ENCODE measurements at regions of chr4 and their contacts with region 1.

Region 1: DNA sequence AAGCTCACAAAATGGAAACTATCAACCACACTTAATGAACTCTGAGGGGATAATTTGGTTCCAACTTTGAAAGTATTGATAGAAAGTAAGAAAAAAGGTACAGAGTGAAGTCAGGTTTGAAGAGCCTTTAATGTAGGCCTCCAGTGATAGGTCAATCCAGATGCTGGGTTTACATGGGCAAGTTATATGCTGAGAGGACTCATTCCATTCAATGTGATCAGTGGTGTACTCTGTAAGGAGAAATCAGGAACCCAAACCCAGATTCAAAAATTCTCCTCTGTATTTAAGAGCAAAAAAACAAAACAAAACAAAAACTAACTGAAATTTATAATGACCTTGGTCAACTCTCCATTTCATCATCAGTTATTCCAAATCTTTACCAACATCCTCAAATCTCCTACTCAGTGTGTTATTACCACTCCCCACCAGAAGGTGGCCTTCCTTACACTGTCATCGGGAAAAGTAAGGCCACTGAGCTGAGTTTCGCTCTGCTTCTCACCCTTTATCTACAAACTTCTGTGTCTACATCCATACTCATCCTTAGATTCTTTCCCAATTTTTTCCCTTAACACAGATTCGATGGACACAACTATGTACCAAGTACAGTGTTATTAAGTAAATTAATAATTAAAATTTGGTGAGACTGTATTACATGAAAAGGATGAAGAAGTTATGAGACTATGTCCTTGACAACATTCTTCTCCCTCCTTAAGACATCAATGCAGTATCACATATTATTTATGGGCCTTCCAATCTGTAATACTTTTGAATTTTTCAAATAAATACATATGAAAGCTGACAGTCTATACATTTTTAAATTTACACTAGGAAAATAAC is 88.3 kb downstream of the ZAR1 start:
- DNase-seq: peak; percentile 73
- H3K4me3 ChIP-seq: no peak overlapping the region
- H3K27ac ChIP-seq: peak overlapping the region in 1 of 4 donors; percentile 12
- H3K4me1 ChIP-seq: no peaks in the 10 kb centered on the region
- H3K27me3 ChIP-seq: no peaks in the 10 kb centered on the region
- CTCF ChIP-seq: peak; percentile 79 to 87 (median 86)
- EP300 ChIP-seq: no peak
- POLR2A ChIP-seq: no peak

Region 2: GRCh38 chr4:48668254-48669017 is 90.1 kb after region 1 on chr4:
- intact Hi-C with region 1: no loop called
- DNase-seq: no peak
- H3K4me3 ChIP-seq: no peak overlapping the region
- H3K27ac ChIP-seq: no peak overlapping the region
- H3K4me1 ChIP-seq: peaks cover 0 to 10% (median 6%) of the 10 kb centered on the region in 4 donors
- H3K27me3 ChIP-seq: no peaks in the 10 kb centered on the region
- CTCF ChIP-seq: no peak
- EP300 ChIP-seq: no peak
- POLR2A ChIP-seq: no peak

Region 3: GRCh38 chr4:48779998-48780742 is 201.8 kb after region 1 on chr4 and contains the start of gene FRYL:
- intact Hi-C with region 1: loop called (anchors 2 kb)
- DNase-seq: peak; percentile 100
- H3K4me3 ChIP-seq: peak within 1 kb of the TSS; percentile 74 to 96 (median 95)
- H3K27ac ChIP-seq: peak within 1 kb of the TSS; percentile 94 to 99 (median 98)
- H3K4me1 ChIP-seq: peaks cover 0 to 39% (median 32%) of the 10 kb centered on the region in 4 donors
- H3K27me3 ChIP-seq: no peaks in the 10 kb centered on the region
- CTCF ChIP-seq: no peak
- EP300 ChIP-seq: no peak
- POLR2A ChIP-seq: peak; percentile 60 to 64
- total RNA-seq, gene FRYL: 44.9 to 72.4 (median 63.2) TPM

Region 4: DNA sequence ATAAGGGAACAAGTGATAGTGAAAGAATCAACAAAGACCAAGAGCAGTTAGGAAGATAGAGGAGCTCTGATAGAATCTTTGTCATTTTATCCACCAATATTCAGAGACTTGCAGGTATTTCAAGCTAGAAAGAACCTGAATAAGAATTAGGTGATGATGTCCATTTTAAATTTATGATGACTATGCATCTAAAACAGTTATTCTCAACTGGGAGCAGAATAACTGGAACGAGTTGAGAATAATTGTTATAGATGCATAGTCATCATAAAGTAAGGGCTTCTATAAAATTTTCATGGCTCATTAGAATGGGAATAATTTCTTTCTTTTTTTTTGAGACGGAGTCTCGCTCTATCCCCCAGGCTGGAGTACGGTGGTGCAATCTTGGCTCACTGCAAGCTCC is 258.3 kb after region 1 on chr4:
- intact Hi-C with region 1: loop called (anchors 2 kb)
- DNase-seq: no peak
- H3K4me3 ChIP-seq: no peak overlapping the region
- H3K27ac ChIP-seq: no peak overlapping the region
- H3K4me1 ChIP-seq: peaks cover 0 to 30% (median 14%) of the 10 kb centered on the region in 4 donors
- H3K27me3 ChIP-seq: no peaks in the 10 kb centered on the region
- CTCF ChIP-seq: no peak
- EP300 ChIP-seq: no peak
- POLR2A ChIP-seq: no peak

Region 5: GRCh38 chr4:48906206-48907173 is 328.1 kb after region 1 on chr4 and contains the start of gene OCIAD2:
- intact Hi-C with region 1: loop called (anchors 5 kb)
- DNase-seq: peak; percentile 69
- H3K4me3 ChIP-seq: peak within 1 kb of the TSS; percentile 42 to 77 (median 67)
- H3K27ac ChIP-seq: peak within 1 kb of the TSS in 3 of 4 donors; percentile 34 to 56 (median 55)
- H3K4me1 ChIP-seq: peaks cover 0 to 27% (median 9%) of the 10 kb centered on the region in 4 donors
- H3K27me3 ChIP-seq: no peaks in the 10 kb centered on the region
- CTCF ChIP-seq: no peak
- EP300 ChIP-seq: no peak
- POLR2A ChIP-seq: no peak
- total RNA-seq, gene OCIAD2: 7.1 to 21.8 (median 11.4) TPM

Region 6: DNA sequence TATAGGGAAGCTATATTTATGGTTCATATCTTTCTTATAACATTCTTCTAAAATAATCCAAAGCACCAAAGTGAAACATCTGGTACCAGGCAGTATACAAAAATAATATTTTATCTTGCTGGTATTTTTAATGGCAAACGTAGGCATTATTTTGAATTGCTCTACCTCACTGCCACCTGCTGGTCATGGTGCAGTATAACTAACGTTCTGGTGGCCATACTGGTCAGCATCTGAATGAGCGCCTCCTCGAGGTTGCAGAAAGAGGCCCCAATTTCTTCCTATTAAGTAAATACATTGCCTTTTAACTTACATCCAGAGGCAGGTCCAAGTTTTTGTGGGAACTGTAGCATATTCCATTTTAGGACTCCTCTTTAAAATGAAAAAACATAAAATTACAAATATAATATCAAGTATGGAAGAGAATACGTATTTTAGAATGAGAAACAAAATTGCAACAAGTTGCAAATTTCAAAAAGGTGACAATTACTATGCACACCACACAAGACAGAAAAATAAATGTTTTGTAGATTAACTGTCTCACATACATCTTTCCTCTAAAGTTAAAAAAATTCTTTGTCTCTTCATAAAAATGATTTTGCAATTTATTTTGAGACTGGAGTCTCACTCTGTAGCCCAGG is 384.8 kb after region 1 on chr4:
- intact Hi-C with region 1: loop called (anchors 1 kb)
- DNase-seq: peak; percentile 79
- H3K4me3 ChIP-seq: no peak overlapping the region
- H3K27ac ChIP-seq: no peak overlapping the region
- H3K4me1 ChIP-seq: no peaks in the 10 kb centered on the region
- H3K27me3 ChIP-seq: no peaks in the 10 kb centered on the region
- CTCF ChIP-seq: peak; percentile 79 to 96 (median 94)
- EP300 ChIP-seq: no peak
- POLR2A ChIP-seq: no peak

Measured in sigmoid colon (tissue), 7 donors.